ENCODE measurements at regions of chr17 and their contacts with region 1.

Region 1: DNA sequence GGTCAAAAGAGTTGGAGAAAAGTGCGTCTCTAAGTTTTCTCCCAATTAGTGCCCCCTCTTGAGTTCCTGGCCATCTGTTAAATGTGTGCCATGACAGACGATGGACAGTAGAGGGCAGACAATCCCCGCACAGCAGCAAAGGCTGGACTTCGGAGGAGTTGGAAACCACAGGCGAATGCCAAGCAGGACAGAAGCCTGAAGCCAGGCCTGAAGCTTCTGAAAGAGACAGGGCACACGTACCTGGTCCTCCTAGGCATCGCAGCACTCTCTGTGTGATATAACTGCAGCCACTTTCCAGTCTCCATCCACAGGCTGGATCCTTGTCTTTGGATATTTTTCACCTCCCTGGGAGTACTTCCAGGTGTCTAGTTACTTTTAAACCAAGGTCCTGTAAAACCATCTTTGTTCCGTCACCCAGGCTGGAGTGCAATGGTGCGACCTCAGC is 14.5 kb downstream of the C17orf100 start:
- DNase-seq: peak; percentile 66
- H3K4me3 ChIP-seq: no peak overlapping the region
- H3K27ac ChIP-seq: no peak overlapping the region
- H3K4me1 ChIP-seq: peaks cover 0 to 5% (median 2%) of the 10 kb centered on the region in 4 donors
- H3K27me3 ChIP-seq: peaks cover 36% of the 10 kb centered on the region
- CTCF ChIP-seq: peak; percentile 76 to 88 (median 79)
- EP300 ChIP-seq: no peak
- POLR2A ChIP-seq: no peak

Region 2: GRCh38 chr17:6843241-6843880 is 177.3 kb after region 1 on chr17:
- in situ Hi-C with region 1: loop called in 2 of 4 experiments (anchors 10 kb)
- intact Hi-C with region 1: loop called (anchors 10 kb)
- DNase-seq: no peak
- H3K4me3 ChIP-seq: no peak overlapping the region
- H3K27ac ChIP-seq: no peak overlapping the region
- H3K4me1 ChIP-seq: no peaks in the 10 kb centered on the region
- H3K27me3 ChIP-seq: peaks cover 42% of the 10 kb centered on the region
- CTCF ChIP-seq: peak; percentile 37 to 57 (median 46)
- EP300 ChIP-seq: no peak
- POLR2A ChIP-seq: no peak

Region 3: GRCh38 chr17:7004398-7005253 is 338.5 kb after region 1 on chr17:
- in situ Hi-C with region 1: loop called in 2 of 4 experiments (anchors 10 to 25 kb)
- intact Hi-C with region 1: no loop called
- DNase-seq: no peak
- H3K4me3 ChIP-seq: no peak overlapping the region
- H3K27ac ChIP-seq: no peak overlapping the region
- H3K4me1 ChIP-seq: peaks cover 0 to 3% (median under 1%) of the 10 kb centered on the region in 4 donors
- H3K27me3 ChIP-seq: no peaks in the 10 kb centered on the region
- CTCF ChIP-seq: peak; percentile 65 to 79 (median 73)
- EP300 ChIP-seq: no peak
- POLR2A ChIP-seq: no peak